Naive thymus-derived CD4-positive, alpha-beta T cell (primary cell): ENCODE measurements at regions of chr1 and their contacts with region 1.

Region 1: GRCh38 chr1:224434691-224435317 is at the start of gene WDR26:
- DNase-seq: peak; percentile 67 to 91 (median 86)
- ATAC-seq: peak; percentile 90
- H3K4me3 ChIP-seq: peak within 1 kb of the TSS; percentile 93
- H3K4me3 Mint-ChIP-seq: peak within 1 kb of the TSS; percentile 84 to 99 (median 96)
- H3K27ac ChIP-seq: peak within 1 kb of the TSS; percentile 97
- H3K27ac Mint-ChIP-seq: peak within 1 kb of the TSS; percentile 92 to 99 (median 97)
- H3K4me1 ChIP-seq: peaks cover 27 to 30% of the 10 kb centered on the region in 2 donors
- H3K4me1 Mint-ChIP-seq: peaks cover 42 to 63% (median 59%) of the 10 kb centered on the region in 7 donors
- H3K27me3 ChIP-seq: no peaks in the 10 kb centered on the region
- H3K27me3 Mint-ChIP-seq: no peaks in the 10 kb centered on the region
- total RNA-seq, gene WDR26: 80.5 to 164 (median 104) TPM

Region 2: DNA sequence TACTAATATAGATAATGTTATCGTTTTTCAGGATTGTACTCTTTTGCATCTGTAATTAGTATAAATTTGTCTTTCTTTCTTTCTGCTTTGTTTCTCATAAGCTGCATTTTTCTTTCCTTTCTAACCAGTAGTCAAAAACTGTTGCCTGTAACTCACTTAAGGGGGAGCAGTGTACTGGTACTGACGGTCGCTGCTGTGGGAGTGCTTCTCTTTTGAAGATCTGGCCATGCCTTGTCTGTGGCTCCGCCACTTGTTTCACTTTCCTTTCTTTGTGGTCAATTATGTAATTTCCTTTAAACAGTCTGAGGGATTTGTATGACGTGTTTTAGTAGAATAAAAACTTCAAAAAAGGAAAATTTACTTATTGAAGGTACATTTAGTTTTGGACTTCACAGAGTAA is 1780.0 kb before region 1 on chr1:
- CTCF ChIA-PET with region 1: no interaction called
- POLR2A ChIA-PET with region 1: no interaction called
- intact Hi-C with region 1: loop called in 1 of 2 experiments (anchors 10 kb)
- DNase-seq: peak in 8 of 9 donors; percentile 62 to 89 (median 83)
- ATAC-seq: peak; percentile 99
- H3K4me3 ChIP-seq: peak overlapping the region; percentile 21
- H3K4me3 Mint-ChIP-seq: peak overlapping the region; percentile 38 to 81 (median 70)
- H3K27ac ChIP-seq: peak overlapping the region; percentile 82
- H3K27ac Mint-ChIP-seq: peak overlapping the region; percentile 85 to 96 (median 94)
- H3K4me1 ChIP-seq: peaks cover 25 to 33% of the 10 kb centered on the region in 2 donors
- H3K4me1 Mint-ChIP-seq: peaks cover 34 to 67% (median 60%) of the 10 kb centered on the region in 7 donors
- H3K27me3 ChIP-seq: no peaks in the 10 kb centered on the region
- H3K27me3 Mint-ChIP-seq: no peaks in the 10 kb centered on the region

Region 3: GRCh38 chr1:224182866-224183590 is 251.8 kb before region 1 on chr1 and contains the start of gene DEGS1:
- CTCF ChIA-PET with region 1: no interaction called
- POLR2A ChIA-PET with region 1: interaction called, 5 read pairs
- intact Hi-C with region 1: loop called (anchors 1 to 2 kb)
- DNase-seq: peak; percentile 77 to 86 (median 84)
- ATAC-seq: peak; percentile 91
- H3K4me3 ChIP-seq: peak within 1 kb of the TSS; percentile 76
- H3K4me3 Mint-ChIP-seq: peak within 1 kb of the TSS; percentile 78 to 95 (median 90)
- H3K27ac ChIP-seq: peak within 1 kb of the TSS; percentile 92
- H3K27ac Mint-ChIP-seq: peak within 1 kb of the TSS; percentile 90 to 96 (median 93)
- H3K4me1 ChIP-seq: peaks cover 20 to 28% of the 10 kb centered on the region in 2 donors
- H3K4me1 Mint-ChIP-seq: peaks cover 35 to 56% (median 53%) of the 10 kb centered on the region in 7 donors
- H3K27me3 ChIP-seq: no peaks in the 10 kb centered on the region
- H3K27me3 Mint-ChIP-seq: no peaks in the 10 kb centered on the region
- total RNA-seq, gene DEGS1: 35.4 to 86.0 (median 38.3) TPM

Region 4: GRCh38 chr1:224356685-224357625 is 77.8 kb before region 1 on chr1 and contains the start of gene CNIH4:
- CTCF ChIA-PET with region 1: interaction called, 3 read pairs
- POLR2A ChIA-PET with region 1: interaction called, 12 read pairs
- intact Hi-C with region 1: loop called (anchors 1 kb)
- DNase-seq: peak; percentile 79 to 95 (median 92)
- ATAC-seq: peak; percentile 99
- H3K4me3 ChIP-seq: peak within 1 kb of the TSS; percentile 67
- H3K4me3 Mint-ChIP-seq: peak within 1 kb of the TSS; percentile 87 to 98 (median 94)
- H3K27ac ChIP-seq: peak within 1 kb of the TSS; percentile 83
- H3K27ac Mint-ChIP-seq: peak within 1 kb of the TSS; percentile 71 to 95 (median 89)
- H3K4me1 ChIP-seq: peaks cover 16 to 27% of the 10 kb centered on the region in 2 donors
- H3K4me1 Mint-ChIP-seq: peaks cover 23 to 58% (median 44%) of the 10 kb centered on the region in 7 donors
- H3K27me3 ChIP-seq: no peaks in the 10 kb centered on the region
- H3K27me3 Mint-ChIP-seq: no peaks in the 10 kb centered on the region
- total RNA-seq, gene CNIH4: 28.1 to 42.0 (median 39.8) TPM

Region 5: GRCh38 chr1:224420106-224420505 is 14.7 kb before region 1 on chr1:
- CTCF ChIA-PET with region 1: interaction called, 4 read pairs
- POLR2A ChIA-PET with region 1: interaction called, 6 read pairs
- intact Hi-C with region 1: loop called in 1 of 2 experiments (anchors 1 kb)
- DNase-seq: no peak
- ATAC-seq: no peak
- H3K4me3 ChIP-seq: no peak overlapping the region
- H3K4me3 Mint-ChIP-seq: no peak overlapping the region
- H3K27ac ChIP-seq: no peak overlapping the region
- H3K27ac Mint-ChIP-seq: no peak overlapping the region
- H3K4me1 ChIP-seq: peaks cover 0 to under 1% of the 10 kb centered on the region in 2 donors
- H3K4me1 Mint-ChIP-seq: peaks cover 11 to 36% (median 19%) of the 10 kb centered on the region in 7 donors
- H3K27me3 ChIP-seq: no peaks in the 10 kb centered on the region
- H3K27me3 Mint-ChIP-seq: no peaks in the 10 kb centered on the region

Region 6: GRCh38 chr1:224454397-224455066 is 19.7 kb after region 1 on chr1:
- CTCF ChIA-PET with region 1: interaction called, 6 read pairs
- POLR2A ChIA-PET with region 1: interaction called, 24 read pairs
- intact Hi-C with region 1: loop called (anchors 1 kb)
- DNase-seq: no peak
- ATAC-seq: no peak
- H3K4me3 ChIP-seq: no peak overlapping the region
- H3K4me3 Mint-ChIP-seq: no peak overlapping the region
- H3K27ac ChIP-seq: no peak overlapping the region
- H3K27ac Mint-ChIP-seq: peak overlapping the region in 4 of 9 donors; percentile 20 to 68 (median 44)
- H3K4me1 ChIP-seq: peaks cover 3% of the 10 kb centered on the region in 2 donors
- H3K4me1 Mint-ChIP-seq: peaks cover 13 to 35% (median 19%) of the 10 kb centered on the region in 7 donors
- H3K27me3 ChIP-seq: no peaks in the 10 kb centered on the region
- H3K27me3 Mint-ChIP-seq: no peaks in the 10 kb centered on the region

Region 7: DNA sequence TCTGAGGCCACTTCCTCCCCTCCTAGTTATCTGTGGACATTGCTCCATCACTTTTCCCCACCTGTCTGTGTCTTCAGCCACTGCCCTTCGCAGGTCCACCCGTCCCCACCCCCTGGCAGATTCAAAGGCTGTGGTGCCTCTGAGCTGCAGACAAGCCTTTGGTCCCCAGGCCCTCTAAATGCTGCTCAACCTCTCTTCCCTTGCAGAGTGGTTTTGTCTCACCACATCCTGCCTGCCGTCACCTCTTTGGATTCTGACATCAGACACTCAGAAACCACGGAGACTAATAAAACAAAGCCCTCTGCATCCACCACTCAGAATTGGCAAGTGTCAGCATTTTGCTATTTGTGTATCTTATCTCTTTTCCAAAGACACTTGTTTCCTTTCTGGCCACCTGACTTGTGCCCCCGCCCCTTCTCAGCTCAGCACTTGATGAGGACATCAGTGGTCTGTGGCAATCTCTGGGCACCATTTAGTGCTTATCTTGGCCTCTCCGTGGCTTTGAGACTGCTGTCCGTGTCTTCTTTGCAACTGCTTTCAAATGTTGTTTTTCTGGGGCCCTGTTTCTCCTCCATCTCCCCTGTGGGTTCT is 189.0 kb after region 1 on chr1:
- CTCF ChIA-PET with region 1: no interaction called
- POLR2A ChIA-PET with region 1: no interaction called
- intact Hi-C with region 1: loop called (anchors 2 to 5 kb)
- DNase-seq: peak in 8 of 9 donors; percentile 70 to 89 (median 83)
- ATAC-seq: peak; percentile 93
- H3K4me3 ChIP-seq: peak overlapping the region; percentile 40
- H3K4me3 Mint-ChIP-seq: peak overlapping the region; percentile 58 to 80 (median 72)
- H3K27ac ChIP-seq: no peak overlapping the region
- H3K27ac Mint-ChIP-seq: peak overlapping the region; percentile 66 to 95 (median 90)
- H3K4me1 ChIP-seq: peaks cover 18 to 25% of the 10 kb centered on the region in 2 donors
- H3K4me1 Mint-ChIP-seq: peaks cover 22 to 47% (median 31%) of the 10 kb centered on the region in 7 donors
- H3K27me3 ChIP-seq: no peaks in the 10 kb centered on the region
- H3K27me3 Mint-ChIP-seq: peaks cover 40 to 45% (median 44%) of the 10 kb centered on the region in 5 donors

Region 8: DNA sequence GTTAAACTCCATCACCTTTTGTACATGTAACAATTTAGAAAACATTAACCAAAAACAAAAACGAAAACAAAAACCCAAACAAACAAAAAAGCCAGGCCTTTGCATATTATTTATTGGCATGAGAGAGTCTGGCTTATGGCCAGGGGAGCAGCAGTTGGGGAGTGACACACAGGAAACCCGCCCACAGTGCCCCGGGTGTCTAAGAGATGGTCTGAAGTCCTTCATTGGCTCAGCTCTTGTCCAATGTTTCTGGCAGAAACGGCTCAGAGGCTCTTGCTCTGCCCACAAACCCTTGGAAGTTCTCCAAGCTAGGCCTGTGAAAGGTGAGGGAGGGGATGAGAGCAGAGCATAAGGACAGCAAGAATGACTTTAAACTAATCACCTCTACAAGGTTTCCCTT is 312.8 kb after region 1 on chr1:
- CTCF ChIA-PET with region 1: no interaction called
- POLR2A ChIA-PET with region 1: no interaction called
- intact Hi-C with region 1: no loop called
- DNase-seq: no peak
- ATAC-seq: no peak
- H3K4me3 ChIP-seq: no peak overlapping the region
- H3K4me3 Mint-ChIP-seq: no peak overlapping the region
- H3K27ac ChIP-seq: no peak overlapping the region
- H3K27ac Mint-ChIP-seq: no peak overlapping the region
- H3K4me1 ChIP-seq: no peaks in the 10 kb centered on the region
- H3K4me1 Mint-ChIP-seq: peaks cover 7 to 27% (median 18%) of the 10 kb centered on the region in 7 donors
- H3K27me3 ChIP-seq: no peaks in the 10 kb centered on the region
- H3K27me3 Mint-ChIP-seq: peaks cover 6 to 19% (median 9%) of the 10 kb centered on the region in 5 donors

Region 9: GRCh38 chr1:225413708-225414375 is 979.0 kb after region 1 on chr1:
- CTCF ChIA-PET with region 1: no interaction called
- POLR2A ChIA-PET with region 1: no interaction called
- intact Hi-C with region 1: no loop called
- DNase-seq: peak in 1 of 9 donors; percentile 6
- ATAC-seq: peak; percentile 34
- H3K4me3 ChIP-seq: no peak overlapping the region
- H3K4me3 Mint-ChIP-seq: no peak overlapping the region
- H3K27ac ChIP-seq: no peak overlapping the region
- H3K27ac Mint-ChIP-seq: no peak overlapping the region
- H3K4me1 ChIP-seq: no peaks in the 10 kb centered on the region
- H3K4me1 Mint-ChIP-seq: peaks cover 8 to 38% (median 19%) of the 10 kb centered on the region in 7 donors
- H3K27me3 ChIP-seq: no peaks in the 10 kb centered on the region
- H3K27me3 Mint-ChIP-seq: no peaks in the 10 kb centered on the region